Breast epithelium (tissue), 4 donors: ENCODE measurements at regions of chr6 and their contacts with region 1.

Region 1: GRCh38 chr6:130765181-130765727 is 62.0 kb upstream of the SMLR1 start:
- DNase-seq: no peak
- H3K4me3 ChIP-seq: no peak overlapping the region
- H3K27ac ChIP-seq: no peak overlapping the region
- H3K4me1 ChIP-seq: no peaks in the 10 kb centered on the region
- H3K27me3 ChIP-seq: no peaks in the 10 kb centered on the region
- CTCF ChIP-seq: no peak
- POLR2A ChIP-seq: no peak

Region 2: GRCh38 chr6:130749402-130749801 is 15.9 kb before region 1 on chr6:
- intact Hi-C with region 1: loop called (anchors 1 kb)
- DNase-seq: no peak
- H3K4me3 ChIP-seq: no peak overlapping the region
- H3K27ac ChIP-seq: no peak overlapping the region
- H3K4me1 ChIP-seq: no peaks in the 10 kb centered on the region
- H3K27me3 ChIP-seq: no peaks in the 10 kb centered on the region
- CTCF ChIP-seq: no peak
- POLR2A ChIP-seq: no peak